Activated CD4-positive, alpha-beta T cell treated with anti-CD3 and anti-CD28 coated beads, Interleukin-2, amount 10 ng/mL, durations not matched to agents 7 days and 5 days (primary cell): ENCODE measurements at regions of chr7 and their contacts with region 1.

Region 1: GRCh38 chr7:101244375-101245146 is at the start of gene FIS1:
- DNase-seq: peak; percentile 94
- H3K4me3 Mint-ChIP-seq: peak within 1 kb of the TSS; percentile 88
- H3K27ac Mint-ChIP-seq: peak within 1 kb of the TSS; percentile 97
- H3K4me1 Mint-ChIP-seq: peaks cover 40% of the 10 kb centered on the region
- H3K27me3 Mint-ChIP-seq: no peaks in the 10 kb centered on the region
- total RNA-seq, gene FIS1: 87.3 to 103 TPM

Region 2: DNA sequence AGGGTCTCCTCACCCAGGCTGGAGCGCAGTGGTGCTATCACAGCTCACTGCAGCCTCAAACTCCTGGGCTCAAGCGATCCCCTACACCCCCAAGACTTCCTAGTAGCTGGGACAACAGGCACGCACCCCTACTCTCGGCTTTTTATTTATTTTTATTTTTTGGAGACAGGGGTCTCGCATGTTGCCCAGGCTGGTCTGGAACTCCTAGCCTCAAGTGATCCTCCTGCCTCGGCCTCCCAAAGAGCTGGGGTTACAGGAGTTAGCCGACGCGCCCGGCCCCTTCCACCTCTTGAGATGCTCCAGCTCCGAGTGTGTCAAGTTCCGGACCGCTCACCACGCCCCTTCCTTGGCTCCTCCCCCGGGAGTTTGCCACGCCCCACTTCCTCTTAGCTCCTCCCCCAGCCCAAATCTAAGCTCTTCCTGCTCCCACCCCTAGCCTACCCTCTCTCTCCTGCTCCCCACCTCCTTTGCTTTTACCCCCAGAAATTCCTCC is 70.8 kb before region 1 on chr7:
- CTCF ChIA-PET with region 1: interaction called, 12 read pairs
- POLR2A ChIA-PET with region 1: no interaction called
- DNase-seq: peak; percentile 69
- H3K4me3 Mint-ChIP-seq: peak overlapping the region; percentile 59
- H3K27ac Mint-ChIP-seq: peak overlapping the region; percentile 9
- H3K4me1 Mint-ChIP-seq: peaks cover 41% of the 10 kb centered on the region
- H3K27me3 Mint-ChIP-seq: peaks cover 89% of the 10 kb centered on the region

Region 3: DNA sequence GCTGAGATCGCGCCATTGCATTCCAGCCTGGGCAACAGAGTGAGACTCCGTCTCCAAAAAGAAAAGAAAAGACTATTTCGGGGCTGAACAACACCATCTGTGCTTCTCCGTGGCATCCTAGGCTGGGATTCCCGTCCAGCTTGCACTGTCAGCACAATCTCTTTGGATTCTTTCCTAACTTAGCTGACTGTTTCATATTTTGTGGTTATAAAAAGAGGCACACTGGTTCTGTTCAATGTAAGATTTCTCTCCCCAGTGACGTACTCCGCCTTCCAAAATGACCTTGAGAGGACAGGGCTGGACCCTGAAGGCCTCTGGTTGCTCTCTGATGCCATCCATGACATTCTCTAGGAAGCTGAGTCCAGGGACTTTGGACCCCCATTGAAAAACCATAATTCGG is 17.8 kb before region 1 on chr7:
- CTCF ChIA-PET with region 1: interaction called, 13 read pairs
- POLR2A ChIA-PET with region 1: no interaction called
- DNase-seq: no peak
- H3K4me3 Mint-ChIP-seq: no peak overlapping the region
- H3K27ac Mint-ChIP-seq: no peak overlapping the region
- H3K4me1 Mint-ChIP-seq: peaks cover 10% of the 10 kb centered on the region
- H3K27me3 Mint-ChIP-seq: no peaks in the 10 kb centered on the region

Region 4: GRCh38 chr7:101342892-101343291 is 98.3 kb after region 1 on chr7:
- CTCF ChIA-PET with region 1: no interaction called
- POLR2A ChIA-PET with region 1: no interaction called
- DNase-seq: no peak
- H3K4me3 Mint-ChIP-seq: no peak overlapping the region
- H3K27ac Mint-ChIP-seq: no peak overlapping the region
- H3K4me1 Mint-ChIP-seq: no peaks in the 10 kb centered on the region
- H3K27me3 Mint-ChIP-seq: no peaks in the 10 kb centered on the region